ENCODE measurements at regions of chr3 and their contacts with region 1.

Region 1: GRCh38 chr3:191356611-191357439 is 26.5 kb upstream of the UTS2B start:
- DNase-seq: peak; percentile 84
- H3K4me3 ChIP-seq: peak overlapping the region in 1 of 3 experiments; percentile 37
- H3K27ac ChIP-seq: peak overlapping the region; percentile 91
- H3K4me1 ChIP-seq: peaks cover 59% of the 10 kb centered on the region
- H3K27me3 ChIP-seq: no peaks in the 10 kb centered on the region
- CTCF ChIP-seq: no peak

Region 2: GRCh38 chr3:191340976-191341375 is 15.8 kb before region 1 on chr3:
- CTCF ChIA-PET with region 1: no interaction called
- dilution Hi-C with region 1: no loop called
- in situ Hi-C with region 1: no loop called
- intact Hi-C with region 1: loop called (anchors 1 kb)
- DNase-seq: no peak
- H3K4me3 ChIP-seq: no peak overlapping the region
- H3K27ac ChIP-seq: no peak overlapping the region
- H3K4me1 ChIP-seq: peaks cover 11% of the 10 kb centered on the region
- H3K27me3 ChIP-seq: no peaks in the 10 kb centered on the region
- CTCF ChIP-seq: no peak